ENCODE measurements at regions of chr16 and their contacts with region 1.

Region 1: GRCh38 chr16:30534368-30535105 is at the start of gene ZNF747:
- DNase-seq: peak; percentile 98
- H3K4me3 Mint-ChIP-seq: peak within 1 kb of the TSS; percentile 88
- H3K27ac Mint-ChIP-seq: peak within 1 kb of the TSS; percentile 97
- H3K4me1 Mint-ChIP-seq: peaks cover 31% of the 10 kb centered on the region
- H3K27me3 Mint-ChIP-seq: no peaks in the 10 kb centered on the region
- total RNA-seq, gene ZNF747: 10.5 and 13.6 TPM in 2 replicates

Region 2: GRCh38 chr16:29815793-29816693 is 718.5 kb before region 1 on chr16 and contains the start of gene PAGR1:
- intact Hi-C with region 1: no loop called
- DNase-seq: peak; percentile 100
- H3K4me3 Mint-ChIP-seq: peak within 1 kb of the TSS; percentile 91
- H3K27ac Mint-ChIP-seq: peak within 1 kb of the TSS; percentile 94
- H3K4me1 Mint-ChIP-seq: peaks cover 62% of the 10 kb centered on the region
- H3K27me3 Mint-ChIP-seq: peaks cover 6% of the 10 kb centered on the region
- total RNA-seq, gene PAGR1: 25.8 and 27.0 TPM in 2 replicates

Region 3: DNA sequence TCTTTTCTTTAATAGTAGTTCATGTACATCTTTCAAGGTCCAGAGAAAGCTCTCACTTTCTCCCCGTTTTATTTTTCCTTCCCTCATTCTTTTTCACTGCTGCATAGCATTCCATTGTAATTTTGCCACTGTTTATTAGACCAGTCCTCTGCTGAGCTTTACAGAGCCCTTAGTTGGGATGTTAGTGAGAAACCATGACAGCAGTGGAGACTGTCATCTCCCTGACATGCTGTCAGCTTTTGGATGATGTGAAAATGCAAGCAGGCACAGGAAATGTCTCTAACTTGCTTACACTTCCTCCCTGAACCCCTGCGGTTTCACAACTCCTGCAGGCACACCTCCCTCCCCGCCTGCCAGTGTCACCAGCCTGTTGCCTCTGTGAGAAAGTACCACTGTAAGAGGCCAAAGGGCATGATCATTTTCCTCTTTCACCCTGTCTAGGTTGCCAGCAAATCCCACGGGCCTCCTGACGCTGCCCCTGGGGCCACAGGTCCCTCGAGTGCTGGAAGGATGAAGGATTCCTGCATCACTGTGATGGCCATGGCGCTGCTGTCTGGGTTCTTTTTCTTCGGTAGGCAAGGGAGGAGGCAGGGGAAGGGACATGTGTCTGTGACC is 62.1 kb before region 1 on chr16 and contains the start of gene ITGAL:
- intact Hi-C with region 1: loop called (anchors 2 kb)
- DNase-seq: peak; percentile 95
- H3K4me3 Mint-ChIP-seq: peak within 1 kb of the TSS; percentile 100
- H3K27ac Mint-ChIP-seq: peak within 1 kb of the TSS; percentile 96
- H3K4me1 Mint-ChIP-seq: peaks cover 57% of the 10 kb centered on the region
- H3K27me3 Mint-ChIP-seq: no peaks in the 10 kb centered on the region
- total RNA-seq, gene ITGAL: 264 and 267 TPM in 2 replicates

Region 4: GRCh38 chr16:30557957-30558788 is 23.6 kb after region 1 on chr16 and contains the start of gene ZNF764:
- intact Hi-C with region 1: loop called (anchors 1 kb)
- DNase-seq: peak; percentile 99
- H3K4me3 Mint-ChIP-seq: peak within 1 kb of the TSS; percentile 91
- H3K27ac Mint-ChIP-seq: peak within 1 kb of the TSS; percentile 91
- H3K4me1 Mint-ChIP-seq: peaks cover 41% of the 10 kb centered on the region
- H3K27me3 Mint-ChIP-seq: no peaks in the 10 kb centered on the region
- total RNA-seq, gene ZNF764: 13.9 and 14.9 TPM in 2 replicates

Region 5: DNA sequence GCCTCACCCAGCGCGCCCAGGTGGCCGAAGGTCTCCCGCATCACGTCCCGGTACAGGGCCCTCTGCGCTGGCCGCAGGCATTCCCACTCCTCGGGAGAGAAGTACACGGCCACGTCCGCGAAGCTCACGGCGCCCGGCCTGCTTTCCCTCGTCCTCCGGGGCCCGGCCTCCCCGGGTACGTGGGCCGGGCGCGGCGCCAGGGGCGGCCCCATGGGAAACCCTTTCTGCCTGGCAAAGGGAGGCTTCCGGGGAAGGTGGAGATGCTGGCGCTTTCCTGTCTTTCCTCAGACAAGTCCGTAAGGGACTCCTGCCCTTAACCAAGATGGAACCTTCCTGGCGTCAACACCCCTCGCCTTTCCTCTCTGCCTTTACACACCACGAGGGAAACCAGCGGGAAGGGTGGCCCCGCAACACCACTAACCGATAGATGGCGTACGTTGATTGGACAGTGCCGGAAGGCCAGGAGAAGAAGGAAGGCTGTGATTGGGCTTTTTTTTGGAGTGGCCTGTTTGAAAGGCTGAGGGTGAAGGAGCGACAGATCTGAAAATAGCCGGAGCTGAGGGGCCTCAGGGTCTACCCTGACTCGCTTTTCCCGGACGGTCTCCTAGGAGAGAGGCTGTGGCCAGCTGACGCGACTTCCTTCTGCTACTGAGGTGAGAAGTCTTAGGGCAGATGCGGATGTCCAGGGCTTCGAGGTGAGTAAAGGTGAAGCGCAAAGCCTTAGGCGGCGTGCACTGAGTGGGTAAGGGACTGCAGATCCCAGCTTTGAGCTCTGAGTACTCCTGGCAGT is 51.1 kb after region 1 on chr16 and contains the start of gene ZNF785:
- intact Hi-C with region 1: loop called (anchors 1 kb)
- DNase-seq: peak; percentile 98
- H3K4me3 Mint-ChIP-seq: peak within 1 kb of the TSS; percentile 90
- H3K27ac Mint-ChIP-seq: peak within 1 kb of the TSS; percentile 91
- H3K4me1 Mint-ChIP-seq: peaks cover 25% of the 10 kb centered on the region
- H3K27me3 Mint-ChIP-seq: no peaks in the 10 kb centered on the region
- total RNA-seq, gene ZNF785: 17.1 and 17.8 TPM in 2 replicates

Region 6: GRCh38 chr16:30698139-30698815 is 163.7 kb after region 1 on chr16:
- intact Hi-C with region 1: loop called (anchors 1 kb)
- DNase-seq: peak; percentile 100
- H3K4me3 Mint-ChIP-seq: peak overlapping the region; percentile 97
- H3K27ac Mint-ChIP-seq: peak overlapping the region; percentile 100
- H3K4me1 Mint-ChIP-seq: peaks cover 34% of the 10 kb centered on the region
- H3K27me3 Mint-ChIP-seq: no peaks in the 10 kb centered on the region